A549 (cell line): ENCODE measurements at regions of chr2 and their contacts with region 1.

Region 1: GRCh38 chr2:43595603-43596412 is at the start of gene THADA:
- DNase-seq: peak; percentile 96 to 100
- ATAC-seq: peak; percentile 97 to 99
- H3K4me3 ChIP-seq: peak within 1 kb of the TSS; percentile 65
- H3K27ac ChIP-seq: peak within 1 kb of the TSS; percentile 90 to 93
- H3K4me1 ChIP-seq: peaks cover 19% of the 10 kb centered on the region
- CTCF ChIP-seq: no peak
- EP300 ChIP-seq: no peak
- POLR2A ChIP-seq: peak; percentile 97
- RAD21 ChIP-seq: no peak
- polyA plus RNA-seq, gene THADA: 37.9 and 51.8 TPM in 2 replicates

Region 2: DNA sequence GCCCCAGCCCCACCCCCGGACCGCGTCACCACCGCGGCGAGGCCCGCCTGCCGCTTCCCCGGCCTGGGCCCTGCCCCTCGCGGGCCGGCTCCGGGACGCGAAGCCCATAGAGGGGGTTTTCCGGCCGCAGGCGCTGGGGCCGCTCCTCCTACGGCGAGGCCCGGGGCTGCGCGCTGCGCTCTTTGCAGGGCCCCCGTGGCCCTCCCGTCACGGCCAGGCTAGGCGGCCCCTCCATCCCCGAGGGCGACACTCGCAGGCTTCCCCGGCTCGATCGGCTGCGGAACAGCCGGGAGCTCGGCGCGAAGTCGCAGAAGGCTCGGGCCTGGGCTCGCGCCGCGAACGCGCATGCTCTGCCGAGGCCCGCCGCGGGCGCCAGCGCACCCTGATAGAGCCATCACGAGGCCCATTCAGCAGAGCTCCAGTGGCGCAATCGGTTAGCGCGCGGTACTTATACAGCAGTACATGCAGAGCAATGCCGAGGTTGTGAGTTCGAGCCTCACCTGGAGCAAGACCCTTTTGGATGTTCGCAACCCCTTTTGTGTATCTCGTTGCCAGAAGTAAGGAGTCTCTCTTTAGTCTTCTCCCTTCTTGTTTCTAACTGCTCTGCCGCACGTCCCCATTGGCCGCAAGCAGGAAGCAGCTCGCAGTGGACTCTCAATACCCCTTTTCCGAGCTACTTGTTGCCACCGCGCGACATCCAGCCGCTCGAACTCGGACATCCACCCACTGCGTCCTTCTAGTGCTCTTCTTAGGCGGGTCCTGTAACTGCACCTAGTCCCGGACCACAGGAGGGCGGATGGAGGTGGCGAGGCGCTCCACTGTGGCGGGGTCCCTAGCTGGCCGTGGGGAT is 785.5 kb before region 1 on chr2:
- CTCF ChIA-PET with region 1: no interaction called
- POLR2A ChIA-PET with region 1: interaction called, 11 read pairs
- DNase-seq: peak; percentile 92 to 98
- ATAC-seq: peak; percentile 84 to 88
- H3K4me3 ChIP-seq: peak overlapping the region; percentile 45
- H3K27ac ChIP-seq: peak overlapping the region; percentile 88 to 92
- H3K4me1 ChIP-seq: peaks cover 10% of the 10 kb centered on the region
- CTCF ChIP-seq: peak; percentile 3; the same call in 1 of the 3 replicates
- EP300 ChIP-seq: no peak
- POLR2A ChIP-seq: peak; percentile 87
- RAD21 ChIP-seq: 0 out of 5 replicates have a peak, but pooled peaks of 1 of the 2 experiments have one; percentile 8

Region 3: GRCh38 chr2:43576981-43577892 is 18.6 kb before region 1 on chr2:
- CTCF ChIA-PET with region 1: interaction called, 18 read pairs
- POLR2A ChIA-PET with region 1: interaction called, 13 read pairs
- DNase-seq: peak; percentile 46 to 77
- ATAC-seq: peak; percentile 59 to 67; a peak in 5 of 6 replicates
- H3K4me3 ChIP-seq: no peak overlapping the region
- H3K27ac ChIP-seq: 0 out of 6 replicates have a peak overlapping the region, but pooled peaks of 1 of the 2 experiments have one; percentile 14
- H3K4me1 ChIP-seq: no peaks in the 10 kb centered on the region
- CTCF ChIP-seq: peak; percentile 93
- EP300 ChIP-seq: no peak
- POLR2A ChIP-seq: no peak
- RAD21 ChIP-seq: peak; percentile 37 to 47; a peak in 4 of 5 replicates

Region 4: DNA sequence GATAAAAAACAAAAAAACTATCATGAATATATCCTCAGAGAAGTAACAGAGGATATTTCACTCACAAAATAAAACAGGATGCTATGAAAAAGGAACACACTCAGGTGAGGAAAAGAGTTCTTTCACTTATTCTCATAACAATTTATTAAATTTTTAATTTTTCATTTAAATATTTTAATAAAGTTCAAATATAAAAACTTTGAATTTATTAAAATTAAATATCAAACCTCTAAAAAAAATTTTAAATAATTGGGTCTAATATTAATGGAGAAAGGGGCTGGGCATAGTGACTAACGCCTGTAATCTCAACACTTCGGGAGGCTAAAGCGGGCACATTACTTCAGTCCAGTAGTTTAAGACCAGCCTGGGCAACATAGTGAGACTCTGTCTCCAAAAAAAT is 10.1 kb before region 1 on chr2:
- CTCF ChIA-PET with region 1: interaction called, 4 read pairs
- POLR2A ChIA-PET with region 1: interaction called, 11 read pairs
- DNase-seq: no peak
- ATAC-seq: no peak
- H3K4me3 ChIP-seq: no peak overlapping the region
- H3K27ac ChIP-seq: no peak overlapping the region
- H3K4me1 ChIP-seq: no peaks in the 10 kb centered on the region
- CTCF ChIP-seq: no peak
- EP300 ChIP-seq: no peak
- POLR2A ChIP-seq: no peak
- RAD21 ChIP-seq: no peak

Region 5: DNA sequence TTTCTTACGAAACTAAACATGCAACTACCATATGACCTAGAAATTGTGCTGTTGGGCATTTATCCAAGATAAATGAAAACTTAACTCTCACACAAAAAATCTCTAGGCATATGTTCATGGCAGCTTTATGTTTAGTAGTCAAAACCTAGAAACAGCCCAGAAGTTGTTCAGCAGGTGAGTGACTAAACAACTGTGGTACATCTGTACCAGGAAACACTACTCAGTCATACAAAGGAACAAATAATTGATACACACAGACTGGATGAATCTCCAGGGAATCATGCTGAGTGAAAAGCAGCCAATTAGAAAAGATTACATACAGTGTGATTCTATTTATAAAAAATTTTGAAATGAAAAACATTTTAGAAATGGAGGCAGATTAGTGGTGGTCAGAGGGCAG is 207.3 kb after region 1 on chr2:
- CTCF ChIA-PET with region 1: no interaction called
- POLR2A ChIA-PET with region 1: no interaction called
- DNase-seq: no peak
- ATAC-seq: no peak
- H3K4me3 ChIP-seq: no peak overlapping the region
- H3K27ac ChIP-seq: no peak overlapping the region
- H3K4me1 ChIP-seq: peaks cover 30% of the 10 kb centered on the region
- CTCF ChIP-seq: no peak
- EP300 ChIP-seq: no peak
- POLR2A ChIP-seq: no peak
- RAD21 ChIP-seq: no peak